Dendritic cell treated with granulocyte-macrophage colony-stimulating factor and Interleukin-4, amounts not matched to agents 40 ng/mL and 50 ng/mL, for 4 days (primary cell): ENCODE measurements at regions of chr1 and their contacts with region 1.

Region 1: DNA sequence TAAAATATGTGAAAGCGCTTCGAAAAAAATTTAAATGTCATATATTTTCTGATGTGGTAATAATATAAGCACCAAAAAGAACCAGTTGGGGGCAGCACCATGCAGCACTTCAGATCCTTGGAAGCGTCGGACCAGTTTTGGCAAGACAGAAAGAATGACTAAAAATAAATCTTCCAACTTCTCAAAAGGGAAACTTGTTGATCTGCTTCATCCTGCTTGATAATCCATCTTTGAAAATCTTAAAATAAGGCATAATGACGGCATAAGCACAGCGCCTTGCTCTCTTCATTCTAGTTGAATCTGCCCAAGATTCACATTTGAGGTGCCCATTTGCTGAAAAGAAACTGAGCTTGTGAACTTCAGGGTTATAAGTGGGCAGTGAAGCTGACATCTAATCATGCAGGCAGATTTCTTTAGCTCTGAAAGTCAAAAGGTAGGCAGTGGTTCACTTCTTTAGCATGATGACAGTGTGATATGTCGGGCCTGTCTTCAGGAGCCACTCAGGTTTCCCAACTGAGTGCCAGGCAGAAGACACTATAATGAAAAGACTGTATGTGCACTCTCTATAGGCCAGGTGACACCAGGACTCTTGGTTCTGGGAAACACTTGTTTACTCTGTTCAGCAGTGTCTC is 19.8 kb upstream of the MUTYH start:
- H3K4me3 Mint-ChIP-seq: no peak overlapping the region
- H3K27ac Mint-ChIP-seq: no peak overlapping the region
- H3K4me1 Mint-ChIP-seq: peaks cover 4% of the 10 kb centered on the region
- H3K27me3 Mint-ChIP-seq: no peaks in the 10 kb centered on the region

Region 2: DNA sequence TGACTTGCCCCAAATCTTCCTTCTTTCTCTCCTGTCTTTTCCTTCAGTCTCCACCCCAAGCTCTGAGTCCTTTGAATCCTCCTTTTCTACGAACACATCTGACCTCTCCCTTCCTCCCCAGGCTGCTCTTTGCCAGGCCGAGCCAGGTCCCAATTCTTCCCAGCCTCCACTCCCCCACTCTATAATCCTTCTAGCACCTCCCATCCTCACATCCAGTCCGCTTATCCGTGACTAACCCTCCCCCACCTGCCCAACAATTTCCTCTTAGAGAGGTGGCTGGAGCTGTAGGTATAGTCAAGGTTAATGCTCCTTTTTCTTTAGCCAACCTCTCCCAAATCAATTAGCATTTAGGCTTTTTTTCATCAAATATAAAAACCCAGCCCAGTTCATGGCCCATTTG is 42.8 kb before region 1 on chr1:
- intact Hi-C with region 1: no loop called
- H3K4me3 Mint-ChIP-seq: no peak overlapping the region
- H3K27ac Mint-ChIP-seq: no peak overlapping the region
- H3K4me1 Mint-ChIP-seq: no peaks in the 10 kb centered on the region
- H3K27me3 Mint-ChIP-seq: no peaks in the 10 kb centered on the region

Region 3: GRCh38 chr1:45490626-45491486 is 130.9 kb after region 1 on chr1 and contains the start of gene TESK2:
- intact Hi-C with region 1: loop called (anchors 1 kb)
- H3K4me3 Mint-ChIP-seq: no peak within 1 kb of the TSS
- H3K27ac Mint-ChIP-seq: no peak within 1 kb of the TSS
- H3K4me1 Mint-ChIP-seq: peaks cover 5% of the 10 kb centered on the region
- H3K27me3 Mint-ChIP-seq: peaks cover 5% of the 10 kb centered on the region

Region 4: DNA sequence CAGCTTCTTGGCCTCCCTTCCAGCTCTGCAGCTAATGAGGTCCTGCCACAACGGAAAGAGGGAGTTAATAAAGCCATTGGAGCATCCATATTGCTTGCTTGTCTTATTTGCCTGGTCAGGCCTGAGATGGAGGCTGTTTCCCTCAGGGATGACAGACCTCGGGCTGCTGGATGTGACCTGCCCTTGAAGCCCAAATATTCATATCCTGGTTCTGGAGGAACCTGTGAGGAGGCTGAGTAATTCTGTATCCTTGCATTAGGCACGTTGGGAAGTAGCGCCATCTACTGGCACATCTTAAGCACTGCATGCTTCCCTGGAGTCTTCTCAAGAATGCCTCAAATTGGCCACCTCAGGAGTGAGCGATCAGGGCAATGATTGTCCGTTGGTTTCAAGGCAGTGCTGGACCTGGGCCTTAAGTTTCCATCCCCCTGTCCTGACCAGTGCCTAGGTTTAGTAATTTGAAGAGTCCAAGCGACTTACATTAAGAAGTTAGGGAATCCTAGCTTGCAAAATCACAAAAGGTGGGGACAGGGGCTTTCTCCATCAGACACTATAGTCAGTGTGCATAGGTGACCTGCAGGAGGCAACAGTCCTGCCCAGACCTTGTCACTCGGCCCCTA is 210.1 kb after region 1 on chr1:
- intact Hi-C with region 1: loop called (anchors 5 kb)
- H3K4me3 Mint-ChIP-seq: no peak overlapping the region
- H3K27ac Mint-ChIP-seq: peak overlapping the region; percentile 42
- H3K4me1 Mint-ChIP-seq: peaks cover 39% of the 10 kb centered on the region
- H3K27me3 Mint-ChIP-seq: no peaks in the 10 kb centered on the region